Activated CD4-positive, alpha-beta T cell treated with anti-CD3 and anti-CD28 coated beads for 36 hours (primary cell): ENCODE measurements at regions of chr9 and their contacts with region 1.

Region 1: DNA sequence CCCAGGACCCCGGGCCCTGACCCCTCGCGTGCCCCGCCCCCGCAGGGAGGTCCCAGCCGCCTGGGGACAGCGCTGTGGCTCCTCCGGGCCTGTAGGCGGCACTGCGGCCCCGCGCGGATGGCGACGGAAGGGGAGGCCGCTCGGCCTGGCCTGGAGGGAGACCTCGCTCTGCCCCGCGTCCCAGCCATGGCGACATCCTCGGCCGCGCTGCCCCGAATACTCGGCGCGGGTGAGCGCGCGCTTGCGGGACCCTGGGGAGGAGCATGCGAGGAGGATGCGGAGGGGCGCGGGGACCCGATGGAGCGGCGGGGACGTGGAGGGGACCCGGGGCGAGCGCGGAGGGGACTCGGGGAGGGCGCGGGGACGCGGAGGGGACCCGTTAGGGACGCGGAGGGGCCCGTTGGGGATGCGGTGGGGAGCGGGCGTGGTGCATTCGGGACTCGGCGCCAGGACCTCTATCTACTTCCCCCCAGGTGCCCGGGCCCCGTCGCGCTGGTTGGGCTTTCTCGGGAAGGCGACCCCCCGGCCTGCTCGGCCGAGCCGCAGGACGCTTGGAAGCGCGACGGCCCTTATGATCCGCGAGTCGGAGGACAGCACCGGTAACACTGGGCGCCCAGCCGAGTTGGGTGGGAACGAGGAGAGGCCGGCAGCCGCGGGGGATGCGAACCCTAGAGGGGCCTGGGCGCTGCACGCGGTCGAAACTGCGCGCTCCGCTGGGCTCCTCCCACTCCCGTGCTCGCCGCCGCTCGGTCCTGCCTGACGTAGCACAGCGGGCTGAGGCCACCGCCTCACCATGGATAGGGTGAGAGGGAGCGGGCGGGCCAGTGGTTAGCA is at the start of gene MRPS2:
- DNase-seq: peak; percentile 91
- ATAC-seq: peak; percentile 93
- H3K4me3 Mint-ChIP-seq: peak within 1 kb of the TSS; percentile 85
- H3K27ac Mint-ChIP-seq: peak within 1 kb of the TSS; percentile 91
- H3K4me1 Mint-ChIP-seq: peaks cover 19% of the 10 kb centered on the region
- H3K27me3 Mint-ChIP-seq: no peaks in the 10 kb centered on the region
- total RNA-seq, gene MRPS2: 50.0 to 70.6 TPM

Region 2: GRCh38 chr9:134135343-134136118 is 1365.2 kb before region 1 on chr9 and contains the start of gene WDR5:
- CTCF ChIA-PET with region 1: no interaction called
- POLR2A ChIA-PET with region 1: no interaction called
- intact Hi-C with region 1: loop called in 1 of 2 experiments (anchors 1 kb)
- DNase-seq: peak; percentile 95
- ATAC-seq: peak; percentile 78
- H3K4me3 Mint-ChIP-seq: peak within 1 kb of the TSS; percentile 98
- H3K27ac Mint-ChIP-seq: peak within 1 kb of the TSS; percentile 90
- H3K4me1 Mint-ChIP-seq: peaks cover 31% of the 10 kb centered on the region
- H3K27me3 Mint-ChIP-seq: no peaks in the 10 kb centered on the region
- total RNA-seq, gene WDR5: 51.4 to 59.2 TPM

Region 3: GRCh38 chr9:134163353-134164196 is 1337.2 kb before region 1 on chr9:
- CTCF ChIA-PET with region 1: no interaction called
- POLR2A ChIA-PET with region 1: no interaction called
- intact Hi-C with region 1: loop called in 1 of 2 experiments (anchors 1 kb)
- DNase-seq: peak; percentile 83
- ATAC-seq: peak; percentile 39
- H3K4me3 Mint-ChIP-seq: no peak overlapping the region
- H3K27ac Mint-ChIP-seq: no peak overlapping the region
- H3K4me1 Mint-ChIP-seq: peaks cover 2% of the 10 kb centered on the region
- H3K27me3 Mint-ChIP-seq: no peaks in the 10 kb centered on the region

Region 4: GRCh38 chr9:135468866-135469521 is 31.7 kb before region 1 on chr9:
- CTCF ChIA-PET with region 1: interaction called, 3 read pairs
- POLR2A ChIA-PET with region 1: no interaction called
- intact Hi-C with region 1: loop called in 1 of 2 experiments (anchors 1 kb)
- DNase-seq: peak; percentile 79
- ATAC-seq: peak; percentile 98
- H3K4me3 Mint-ChIP-seq: peak overlapping the region; percentile 42
- H3K27ac Mint-ChIP-seq: no peak overlapping the region
- H3K4me1 Mint-ChIP-seq: peaks cover 19% of the 10 kb centered on the region
- H3K27me3 Mint-ChIP-seq: peaks cover 39% of the 10 kb centered on the region

Region 5: GRCh38 chr9:135480071-135480941 is 20.4 kb before region 1 on chr9:
- CTCF ChIA-PET with region 1: interaction called, 4 read pairs
- POLR2A ChIA-PET with region 1: no interaction called
- intact Hi-C with region 1: loop called (anchors 2 kb)
- DNase-seq: peak; percentile 12
- ATAC-seq: peak; percentile 55
- H3K4me3 Mint-ChIP-seq: no peak overlapping the region
- H3K27ac Mint-ChIP-seq: no peak overlapping the region
- H3K4me1 Mint-ChIP-seq: peaks cover 6% of the 10 kb centered on the region
- H3K27me3 Mint-ChIP-seq: peaks cover 33% of the 10 kb centered on the region

Region 6: GRCh38 chr9:135602789-135603481 is 102.2 kb after region 1 on chr9:
- CTCF ChIA-PET with region 1: no interaction called
- POLR2A ChIA-PET with region 1: no interaction called
- intact Hi-C with region 1: loop called in 1 of 2 experiments (anchors 5 kb)
- DNase-seq: peak; percentile 75
- ATAC-seq: peak; percentile 58
- H3K4me3 Mint-ChIP-seq: no peak overlapping the region
- H3K27ac Mint-ChIP-seq: no peak overlapping the region
- H3K4me1 Mint-ChIP-seq: no peaks in the 10 kb centered on the region
- H3K27me3 Mint-ChIP-seq: peaks cover 10% of the 10 kb centered on the region